AG04450 (cell line): ENCODE measurements at regions of chr1 and their contacts with region 1.

Region 1: DNA sequence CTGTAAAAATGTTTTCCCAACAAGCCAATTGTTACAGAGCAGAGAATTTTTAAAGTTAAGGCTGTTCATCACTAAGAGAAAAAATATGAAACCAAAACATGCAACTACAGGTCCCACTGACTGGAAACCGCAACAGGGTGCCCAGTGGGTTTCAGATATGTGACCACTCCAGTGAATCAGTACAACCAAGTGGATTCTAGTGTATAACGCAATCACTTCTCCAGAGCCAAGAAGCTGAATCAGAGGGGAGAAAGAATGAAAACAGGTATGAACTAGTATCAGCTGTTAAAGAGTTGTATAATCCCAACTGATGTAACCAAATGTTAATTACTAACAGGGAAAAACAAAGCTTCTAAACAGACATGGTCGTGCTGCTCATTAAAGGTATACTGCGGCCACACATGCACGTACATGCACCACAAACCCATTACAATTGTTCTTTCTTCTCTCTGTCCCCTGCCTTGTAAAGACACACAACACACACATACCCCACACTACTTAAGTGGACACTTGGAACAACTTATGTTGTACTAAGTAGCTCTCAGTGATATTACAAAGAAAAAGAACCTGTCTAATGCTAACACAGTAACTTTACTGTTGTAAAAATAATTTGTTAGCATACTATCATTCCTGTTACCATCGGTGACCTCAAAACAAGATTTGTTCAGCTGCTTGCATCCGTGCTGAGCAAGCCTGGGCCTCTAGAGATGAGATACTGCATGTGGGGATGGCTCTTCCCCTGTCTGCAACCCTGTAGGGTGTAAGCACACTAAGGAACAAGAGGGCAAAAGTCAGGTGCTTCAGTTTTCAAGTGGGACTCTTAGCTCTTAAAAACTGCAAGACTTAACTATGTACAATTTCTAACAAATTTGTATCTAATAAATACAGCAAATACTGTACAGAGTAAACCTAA is 74.2 kb downstream of the PTPN14 start:
- DNase-seq: peak; percentile 56
- H3K4me3 ChIP-seq: no peak overlapping the region
- H3K27ac ChIP-seq: peak overlapping the region; percentile 43
- H3K27me3 ChIP-seq: no peaks in the 10 kb centered on the region
- CTCF ChIP-seq: no peak

Region 2: GRCh38 chr1:214438530-214438929 is 38.7 kb before region 1 on chr1:
- CTCF ChIA-PET with region 1: no interaction called
- POLR2A ChIA-PET with region 1: interaction called, 11 read pairs
- DNase-seq: no peak
- H3K4me3 ChIP-seq: no peak overlapping the region
- H3K27ac ChIP-seq: peak overlapping the region; percentile 31
- H3K27me3 ChIP-seq: no peaks in the 10 kb centered on the region
- CTCF ChIP-seq: no peak

Region 3: DNA sequence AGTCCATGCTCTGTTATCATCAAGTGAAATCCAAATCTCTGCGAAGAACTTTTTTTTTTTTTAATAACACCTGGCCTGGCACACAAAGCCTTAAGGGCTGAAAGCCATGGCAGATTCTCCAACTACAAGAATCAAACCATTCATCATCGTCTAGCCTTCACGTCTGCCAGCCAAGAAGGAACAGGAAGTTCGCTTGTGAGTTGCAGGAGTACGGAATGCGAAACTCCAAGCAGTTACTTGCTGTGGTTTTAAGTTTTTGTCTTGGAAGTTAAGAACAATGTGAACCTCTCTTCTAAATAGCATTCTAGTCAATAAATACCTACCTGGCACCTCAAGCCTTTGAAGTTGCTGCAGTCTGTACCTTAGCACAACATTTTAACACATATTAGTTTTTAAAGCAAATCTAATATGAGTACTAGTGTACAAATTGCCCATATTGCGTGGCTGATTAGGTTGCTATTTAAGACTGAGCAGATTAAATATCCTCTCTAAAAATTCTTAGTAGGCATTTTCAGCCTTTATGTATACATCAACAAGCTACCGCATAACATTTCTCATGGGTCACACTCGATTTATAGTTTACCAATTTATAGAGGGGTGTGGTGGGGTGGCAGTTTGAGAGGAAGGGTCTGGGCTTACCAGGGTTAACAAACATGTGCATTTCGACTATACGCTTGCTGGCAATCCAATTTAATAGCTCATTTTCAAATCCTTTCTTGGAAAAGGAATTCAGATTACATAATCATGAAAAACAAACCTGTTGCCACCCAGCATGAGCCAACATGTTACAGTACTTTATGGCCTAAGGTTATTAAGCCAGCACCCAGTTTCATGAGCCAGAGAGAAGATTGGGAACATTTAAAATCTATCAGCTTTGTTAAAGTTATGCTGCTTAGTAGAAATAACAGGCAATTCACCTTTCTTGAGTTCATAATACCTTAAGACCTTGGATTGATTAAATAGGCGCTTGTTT is 96.5 kb after region 1 on chr1:
- CTCF ChIA-PET with region 1: no interaction called
- POLR2A ChIA-PET with region 1: no interaction called
- DNase-seq: no peak
- H3K4me3 ChIP-seq: no peak overlapping the region
- H3K27ac ChIP-seq: no peak overlapping the region
- H3K27me3 ChIP-seq: no peaks in the 10 kb centered on the region
- CTCF ChIP-seq: no peak